Astrocyte of the spinal cord (primary cell): ENCODE measurements at regions of chr4 and their contacts with region 1.

Region 1: DNA sequence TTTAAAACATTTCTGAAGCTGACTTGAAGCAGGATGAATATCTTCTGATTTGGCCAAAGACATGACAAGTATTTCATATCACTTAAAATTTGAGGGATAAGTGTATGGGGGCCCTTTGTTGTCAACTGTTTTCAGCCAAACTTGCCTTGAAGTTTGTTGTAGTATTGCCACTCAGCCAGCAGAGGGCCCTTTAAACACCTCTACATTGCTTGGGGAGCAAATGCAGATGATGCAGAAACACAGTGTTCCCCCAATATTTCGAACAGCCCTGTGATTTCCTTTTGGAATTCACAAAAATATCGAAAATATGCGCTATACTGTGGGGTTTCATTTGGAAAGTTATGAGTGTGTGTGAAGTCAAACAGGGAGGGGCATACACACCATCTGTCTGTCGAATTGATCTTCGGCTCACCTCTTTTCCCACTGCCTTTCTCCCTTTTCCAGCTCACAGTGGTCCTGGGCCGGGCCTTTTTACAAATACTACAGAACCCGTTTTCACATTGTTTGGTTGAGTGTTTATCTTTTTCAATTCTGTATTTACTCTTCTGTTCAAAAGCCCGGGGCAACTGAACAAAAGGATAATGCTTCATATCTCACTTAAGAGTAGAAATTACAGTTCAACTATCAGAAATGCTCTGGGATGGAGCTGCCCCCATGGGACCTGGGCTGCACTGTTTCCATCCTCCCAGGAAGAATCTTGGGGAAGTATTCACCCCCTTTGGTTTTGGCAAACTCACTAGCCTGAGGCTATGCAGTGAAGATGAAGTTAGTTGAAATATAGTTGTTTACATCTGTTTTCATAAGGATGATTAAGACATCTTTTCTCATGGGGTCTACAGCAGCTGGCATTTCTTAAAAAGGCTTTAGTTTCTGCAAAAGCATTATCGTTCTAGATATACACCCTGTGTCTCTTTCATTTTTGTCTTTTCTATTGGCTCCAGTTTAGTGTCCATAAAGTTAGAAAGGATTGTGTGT is 137.6 kb downstream of the EGF start:
- DNase-seq: peak; percentile 58
- H3K4me3 ChIP-seq: no peak overlapping the region
- CTCF ChIP-seq: peak; percentile 86

Region 2: GRCh38 chr4:110516106-110516922 is 466.1 kb after region 1 on chr4:
- in situ Hi-C with region 1: loop called (anchors 25 kb)
- DNase-seq: peak; percentile 67
- H3K4me3 ChIP-seq: peak overlapping the region; percentile 45
- CTCF ChIP-seq: peak; percentile 87